ENCODE measurements at regions of chr11 and their contacts with region 1.

Region 1: GRCh38 chr11:108340970-108341369 is 118.1 kb downstream of the ATM start:
- DNase-seq: no peak
- H3K4me3 ChIP-seq: no peak overlapping the region
- H3K27ac ChIP-seq: no peak overlapping the region
- H3K4me1 ChIP-seq: no peaks in the 10 kb centered on the region
- H3K27me3 ChIP-seq: no peaks in the 10 kb centered on the region
- CTCF ChIP-seq: no peak
- EP300 ChIP-seq: no peak
- POLR2A ChIP-seq: no peak

Region 2: GRCh38 chr11:108388576-108388975 is 47.6 kb after region 1 on chr11:
- in situ Hi-C with region 1: no loop called
- intact Hi-C with region 1: loop called (anchors 2 kb)
- DNase-seq: no peak
- H3K4me3 ChIP-seq: no peak overlapping the region
- H3K27ac ChIP-seq: no peak overlapping the region
- H3K4me1 ChIP-seq: no peaks in the 10 kb centered on the region
- H3K27me3 ChIP-seq: no peaks in the 10 kb centered on the region
- CTCF ChIP-seq: no peak
- EP300 ChIP-seq: no peak
- POLR2A ChIP-seq: no peak

Region 3: GRCh38 chr11:108405706-108406105 is 64.7 kb after region 1 on chr11:
- in situ Hi-C with region 1: no loop called
- intact Hi-C with region 1: loop called (anchors 2 kb)
- DNase-seq: no peak
- H3K4me3 ChIP-seq: no peak overlapping the region
- H3K27ac ChIP-seq: no peak overlapping the region
- H3K4me1 ChIP-seq: no peaks in the 10 kb centered on the region
- H3K27me3 ChIP-seq: no peaks in the 10 kb centered on the region
- CTCF ChIP-seq: no peak
- EP300 ChIP-seq: no peak
- POLR2A ChIP-seq: no peak

Measured in transverse colon (tissue), 4 donors.